Mammary epithelial cell (primary cell): ENCODE measurements at regions of chr14 and their contacts with region 1.

Region 1: GRCh38 chr14:89767861-89768268 is 186.7 kb downstream of the EFCAB11 start:
- DNase-seq: peak; percentile 25
- H3K4me3 ChIP-seq: no peak overlapping the region
- H3K27ac ChIP-seq: no peak overlapping the region
- H3K4me1 ChIP-seq: no peaks in the 10 kb centered on the region
- H3K27me3 ChIP-seq: no peaks in the 10 kb centered on the region
- CTCF ChIP-seq: peak; percentile 37 to 74

Region 2: GRCh38 chr14:89027097-89027740 is 740.6 kb before region 1 on chr14:
- CTCF ChIA-PET with region 1: no interaction called
- dilution Hi-C with region 1: no loop called
- in situ Hi-C with region 1: loop called in 1 of 2 experiments (anchors 25 kb)
- intact Hi-C with region 1: loop called (anchors 5 kb)
- DNase-seq: peak; percentile 36
- H3K4me3 ChIP-seq: peak overlapping the region; percentile 51 to 62 (median 52)
- H3K27ac ChIP-seq: no peak overlapping the region
- H3K4me1 ChIP-seq: peaks cover 6% of the 10 kb centered on the region
- H3K27me3 ChIP-seq: peaks cover 6% of the 10 kb centered on the region
- CTCF ChIP-seq: peak; percentile 36 to 72

Region 3: DNA sequence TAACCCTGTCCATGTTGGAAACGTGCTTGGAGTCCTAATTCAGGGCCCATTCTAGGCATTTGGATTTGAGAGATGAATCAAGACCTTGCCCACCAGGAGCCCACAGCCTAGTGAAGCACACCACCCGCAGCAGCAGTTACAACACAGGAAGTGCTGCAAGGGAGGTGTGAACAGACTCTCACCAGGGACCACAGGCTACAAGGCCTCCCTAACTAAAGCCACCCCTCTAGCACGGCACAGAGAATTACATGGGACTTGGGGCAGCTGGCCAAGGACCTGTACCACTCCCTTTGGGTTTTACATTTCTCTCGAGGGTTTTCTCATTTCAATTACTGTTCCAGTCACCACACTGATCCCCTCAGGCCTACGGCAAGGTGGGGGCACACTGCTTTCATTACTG is 301.4 kb before region 1 on chr14:
- CTCF ChIA-PET with region 1: no interaction called
- dilution Hi-C with region 1: no loop called
- in situ Hi-C with region 1: no loop called
- intact Hi-C with region 1: no loop called
- DNase-seq: no peak
- H3K4me3 ChIP-seq: no peak overlapping the region
- H3K27ac ChIP-seq: no peak overlapping the region
- H3K4me1 ChIP-seq: no peaks in the 10 kb centered on the region
- H3K27me3 ChIP-seq: no peaks in the 10 kb centered on the region
- CTCF ChIP-seq: no peak

Region 4: DNA sequence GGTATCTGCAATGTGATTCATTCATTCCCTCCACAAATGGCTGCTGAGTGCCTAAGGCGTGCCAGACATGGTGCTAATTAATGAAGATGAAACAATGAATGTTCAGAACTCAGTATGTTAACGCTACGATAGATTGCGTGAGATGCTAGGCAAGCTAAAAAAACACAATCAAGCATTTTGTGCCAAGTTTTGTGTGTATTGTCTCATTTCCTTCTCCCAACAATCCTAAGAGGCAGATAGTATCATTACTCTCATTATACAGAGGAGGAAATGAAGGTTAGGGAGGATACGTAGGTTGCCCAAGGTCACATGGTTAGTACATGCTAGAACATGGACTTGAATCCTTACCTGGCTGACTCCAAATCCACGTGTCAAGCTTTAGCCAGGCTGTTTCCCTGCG is 77.7 kb before region 1 on chr14:
- CTCF ChIA-PET with region 1: no interaction called
- dilution Hi-C with region 1: no loop called
- in situ Hi-C with region 1: no loop called
- intact Hi-C with region 1: no loop called
- DNase-seq: no peak
- H3K4me3 ChIP-seq: no peak overlapping the region
- H3K27ac ChIP-seq: no peak overlapping the region
- H3K4me1 ChIP-seq: no peaks in the 10 kb centered on the region
- H3K27me3 ChIP-seq: no peaks in the 10 kb centered on the region
- CTCF ChIP-seq: no peak